Heart left ventricle (tissue), 16 donors: ENCODE measurements at regions of chr12 and their contacts with region 1.

Region 1: GRCh38 chr12:108939594-108939993 is 59.7 kb downstream of the DAO start:
- DNase-seq: no peak
- ATAC-seq: peak; percentile 26 to 86 (median 81)
- H3K4me3 ChIP-seq: no peak overlapping the region
- H3K27ac ChIP-seq: no peak overlapping the region
- H3K4me1 ChIP-seq: no peaks in the 10 kb centered on the region
- H3K27me3 ChIP-seq: no peaks in the 10 kb centered on the region
- CTCF ChIP-seq: no peak
- POLR2A ChIP-seq: no peak

Region 2: DNA sequence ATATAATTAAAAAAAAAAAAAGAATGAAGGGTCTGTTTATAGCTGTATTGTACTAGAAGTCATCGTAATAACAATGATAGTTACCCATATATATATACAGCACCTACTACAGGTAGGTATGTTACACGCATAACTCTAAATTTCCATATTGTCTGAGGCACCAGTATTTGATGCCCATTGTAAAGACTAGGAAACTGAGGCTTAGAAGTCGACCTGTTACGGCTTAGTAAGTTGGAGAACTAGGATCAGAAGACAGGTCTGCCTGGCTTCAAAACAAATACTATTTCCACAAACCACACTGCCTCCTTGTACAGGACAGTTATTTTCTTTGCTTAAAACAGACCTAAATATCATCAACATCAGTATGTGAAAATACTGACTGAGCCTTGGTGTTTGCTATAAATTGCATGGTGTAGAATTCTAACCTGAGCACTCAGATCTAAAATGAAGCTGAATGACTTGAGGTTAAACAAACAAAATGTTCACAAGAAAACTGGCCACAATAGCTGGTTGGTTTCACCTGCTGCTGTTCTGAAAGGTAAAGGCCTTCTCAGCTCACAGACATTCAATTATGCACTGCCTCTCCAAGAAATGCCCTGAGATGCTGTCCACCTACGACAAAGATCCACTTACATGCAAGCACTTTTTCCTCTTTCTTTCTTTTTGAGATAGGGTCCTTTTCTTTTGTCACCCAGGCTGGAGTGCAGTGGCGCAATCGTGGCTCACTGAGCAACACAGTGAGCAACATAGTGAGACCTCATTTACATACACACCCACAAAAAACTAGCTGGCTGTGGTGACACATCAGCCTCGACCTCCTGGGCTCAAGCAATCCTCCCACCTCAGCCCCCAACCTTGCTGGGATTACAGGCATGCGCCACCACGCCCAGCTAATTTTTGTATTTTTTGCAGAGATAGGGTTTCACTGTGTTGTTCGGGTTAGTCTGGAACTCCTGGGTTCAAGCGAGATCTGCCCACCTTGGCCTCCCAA is 117.9 kb before region 1 on chr12:
- intact Hi-C with region 1: no loop called
- DNase-seq: peak in 1 of 5 donors; percentile 55
- ATAC-seq: no peak
- H3K4me3 ChIP-seq: no peak overlapping the region
- H3K27ac ChIP-seq: peak overlapping the region in 11 of 12 donors; percentile 52 to 94 (median 91)
- H3K4me1 ChIP-seq: peaks cover 26 to 81% (median 75%) of the 10 kb centered on the region in 12 donors
- H3K27me3 ChIP-seq: no peaks in the 10 kb centered on the region
- CTCF ChIP-seq: no peak
- POLR2A ChIP-seq: no peak

Region 3: DNA sequence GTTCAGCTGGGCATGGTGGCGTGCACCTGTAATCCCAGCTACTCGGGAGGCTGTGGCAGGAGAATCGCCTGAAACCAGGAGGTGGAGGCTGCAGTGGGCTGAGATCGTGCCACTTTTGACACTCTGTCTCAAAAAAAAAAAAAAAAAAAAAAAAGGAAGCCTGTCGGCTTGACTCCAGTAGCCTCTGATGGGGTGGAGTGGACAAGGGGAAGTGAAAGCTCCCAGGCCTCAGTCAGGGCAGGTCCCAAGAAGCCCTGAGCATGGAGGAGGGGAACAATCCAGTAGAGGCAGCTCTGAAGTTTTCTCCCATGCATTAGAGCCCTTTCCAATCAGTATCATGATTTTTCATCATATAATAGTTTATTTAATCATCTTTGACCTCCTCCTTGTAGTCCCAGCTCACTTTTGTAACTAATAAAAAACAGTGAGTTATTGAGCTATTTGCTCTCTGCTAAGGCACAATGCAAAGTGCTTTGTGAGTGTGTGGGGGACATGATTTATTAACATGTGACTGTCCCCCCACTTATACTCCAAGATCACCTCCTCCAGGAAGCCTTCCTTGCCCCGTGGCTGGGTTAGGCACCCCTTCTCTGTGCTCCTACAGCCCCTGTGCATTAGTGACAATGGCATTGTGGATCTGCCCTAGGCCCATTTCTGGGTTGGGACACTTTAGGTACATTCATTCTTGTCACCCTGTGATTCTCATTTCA is 77.6 kb before region 1 on chr12:
- intact Hi-C with region 1: loop called in 1 of 10 experiments (anchors 5 kb)
- DNase-seq: peak in 3 of 5 donors; percentile 61 to 68 (median 66)
- ATAC-seq: peak in 1 of 4 donors; percentile 38
- H3K4me3 ChIP-seq: no peak overlapping the region
- H3K27ac ChIP-seq: peak overlapping the region in 3 of 12 donors; percentile 31 to 69 (median 43)
- H3K4me1 ChIP-seq: peaks cover 0 to 42% (median 12%) of the 10 kb centered on the region in 12 donors
- H3K27me3 ChIP-seq: no peaks in the 10 kb centered on the region
- CTCF ChIP-seq: no peak
- POLR2A ChIP-seq: no peak

Region 4: DNA sequence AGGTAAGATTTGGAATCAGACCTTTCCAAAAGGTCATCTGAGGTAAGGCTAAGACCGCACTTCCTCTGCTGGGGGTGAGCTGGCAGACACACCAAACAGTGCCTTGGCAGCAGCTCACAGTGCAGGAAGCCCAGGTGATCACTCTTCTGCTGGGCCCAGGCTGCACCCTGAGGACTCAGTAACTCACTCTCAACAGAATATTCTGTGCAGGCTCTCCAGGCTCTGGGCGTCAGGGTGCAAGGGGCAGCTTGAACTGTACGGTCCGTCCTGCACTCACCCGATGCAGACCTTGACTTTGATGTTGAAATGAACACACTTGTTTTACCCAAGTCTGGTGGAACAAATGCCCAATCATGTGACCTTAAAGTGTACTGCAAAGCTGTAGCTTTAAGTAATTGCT is 147.7 kb after region 1 on chr12:
- intact Hi-C with region 1: loop called in 1 of 10 experiments (anchors 10 kb)
- DNase-seq: no peak
- ATAC-seq: peak in 3 of 4 donors; percentile 47 to 54 (median 48)
- H3K4me3 ChIP-seq: no peak overlapping the region
- H3K27ac ChIP-seq: no peak overlapping the region
- H3K4me1 ChIP-seq: peaks cover 0 to 12% (median 6%) of the 10 kb centered on the region in 12 donors
- H3K27me3 ChIP-seq: no peaks in the 10 kb centered on the region
- CTCF ChIP-seq: no peak
- POLR2A ChIP-seq: no peak

Region 5: GRCh38 chr12:110355073-110355472 is 1415.5 kb after region 1 on chr12:
- intact Hi-C with region 1: no loop called
- DNase-seq: no peak
- ATAC-seq: peak in 2 of 4 donors; percentile 24 to 39
- H3K4me3 ChIP-seq: no peak overlapping the region
- H3K27ac ChIP-seq: no peak overlapping the region
- H3K4me1 ChIP-seq: peaks cover 0 to 18% (median 0%) of the 10 kb centered on the region in 12 donors
- H3K27me3 ChIP-seq: no peaks in the 10 kb centered on the region
- CTCF ChIP-seq: peak in 8 of 12 donors; percentile 9 to 44 (median 19)
- POLR2A ChIP-seq: no peak